Right ventricle myocardium inferior (tissue), 1 donor: ENCODE measurements at regions of chr2 and their contacts with region 1.

Region 1: DNA sequence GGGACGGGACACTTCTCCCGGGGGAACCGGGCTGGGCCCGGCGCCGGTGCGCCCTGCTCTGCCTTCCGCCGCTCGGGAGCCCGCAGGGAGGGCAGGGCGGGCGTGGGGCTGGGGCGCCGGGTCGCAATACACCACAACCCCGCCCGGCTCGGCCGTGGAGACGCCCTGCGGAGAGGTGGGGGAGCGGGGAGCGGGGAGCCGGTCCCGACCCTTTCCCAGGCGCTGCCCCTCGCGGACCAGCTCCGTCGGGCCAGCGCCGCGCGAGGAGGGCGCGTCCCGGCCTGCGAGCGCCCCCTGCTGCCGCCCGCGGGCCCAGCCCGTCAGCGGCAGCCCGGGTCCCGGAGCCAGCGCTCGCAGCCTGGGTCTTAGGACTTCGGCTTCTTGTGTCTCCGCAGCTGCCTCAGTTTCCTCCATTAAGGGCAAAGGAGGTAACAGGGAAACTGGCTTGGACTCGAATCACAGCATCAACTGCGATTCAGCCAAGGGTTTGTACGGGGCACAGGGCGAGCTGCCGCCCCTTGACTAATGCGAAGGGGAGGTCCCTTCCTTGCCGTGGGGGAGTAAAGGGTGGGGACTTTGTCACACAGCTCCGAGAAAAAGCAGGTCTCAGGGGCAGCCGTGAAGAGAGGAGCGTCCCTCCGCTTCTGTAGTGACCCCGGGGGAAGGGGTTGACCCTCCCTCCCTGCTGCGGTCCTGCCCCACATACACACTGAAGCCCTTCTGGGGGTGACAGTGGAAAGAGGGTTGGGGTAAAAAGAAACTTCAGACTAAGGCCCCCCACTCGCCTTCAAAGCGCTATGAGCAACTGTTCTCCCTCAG is 717 bp upstream of the ADRA2B start:
- DNase-seq: peak; percentile 81
- ATAC-seq: peak; percentile 85

Region 2: GRCh38 chr2:96024336-96025193 is 92.5 kb before region 1 on chr2:
- intact Hi-C with region 1: loop called (anchors 10 kb)
- DNase-seq: peak; percentile 51
- ATAC-seq: no peak

Region 3: GRCh38 chr2:96072746-96073145 is 44.3 kb before region 1 on chr2:
- intact Hi-C with region 1: loop called (anchors 5 kb)
- DNase-seq: peak; percentile 42
- ATAC-seq: peak; percentile 51

Region 4: DNA sequence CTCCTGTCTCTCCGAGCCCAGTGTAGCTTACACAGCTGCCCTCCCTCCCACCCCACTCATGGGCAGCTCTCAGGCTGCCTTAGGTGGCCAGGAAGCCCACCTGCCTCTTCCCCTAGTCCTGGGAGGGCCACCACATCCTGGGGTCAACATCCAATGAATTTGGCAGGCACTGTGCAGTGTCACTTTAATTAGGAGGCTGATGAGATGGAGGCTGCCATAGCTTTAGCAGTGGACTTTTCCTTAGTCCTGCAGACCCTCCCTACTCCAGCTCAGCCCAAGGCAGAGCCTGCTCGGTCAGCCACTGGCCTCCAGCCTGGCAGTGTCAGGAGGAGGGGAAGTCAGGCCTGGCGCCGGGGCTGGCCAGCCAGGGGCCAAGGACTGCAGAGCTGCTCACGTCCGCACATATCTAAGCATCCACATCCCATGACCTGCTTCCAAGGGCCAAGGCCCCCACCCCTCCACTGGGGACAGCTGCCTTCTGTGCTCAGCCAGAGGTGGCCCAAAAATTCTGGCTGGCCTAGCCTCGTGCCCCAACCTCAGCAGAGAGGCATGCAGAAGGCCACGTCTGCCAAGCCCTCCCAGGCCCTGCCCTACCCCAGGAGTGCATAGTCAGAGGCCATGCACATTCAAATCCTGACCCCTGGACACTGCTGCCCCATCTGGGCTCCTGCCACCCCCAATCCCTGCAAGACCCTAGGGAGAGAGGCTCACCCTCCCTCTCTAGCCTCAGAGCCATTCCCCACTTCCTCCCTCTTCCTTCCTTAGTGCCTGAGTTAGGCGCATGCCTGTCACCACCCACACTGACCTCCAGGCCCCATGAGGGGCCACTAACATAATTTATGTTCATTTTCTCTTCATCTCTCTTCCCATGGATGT is 33.8 kb before region 1 on chr2:
- intact Hi-C with region 1: loop called (anchors 5 kb)
- DNase-seq: peak; percentile 71
- ATAC-seq: peak; percentile 90

Region 5: GRCh38 chr2:96099861-96100798 is 17.0 kb before region 1 on chr2:
- intact Hi-C with region 1: no loop called
- DNase-seq: no peak
- ATAC-seq: no peak